Sciatic nerve (tissue), 2 donors: ENCODE measurements at regions of chr5 and their contacts with region 1.

Region 1: GRCh38 chr5:611721-612486 is at the start of gene CEP72:
- DNase-seq: peak; percentile 95
- ATAC-seq: peak; percentile 98
- total RNA-seq, gene CEP72: 7.5 TPM

Region 2: DNA sequence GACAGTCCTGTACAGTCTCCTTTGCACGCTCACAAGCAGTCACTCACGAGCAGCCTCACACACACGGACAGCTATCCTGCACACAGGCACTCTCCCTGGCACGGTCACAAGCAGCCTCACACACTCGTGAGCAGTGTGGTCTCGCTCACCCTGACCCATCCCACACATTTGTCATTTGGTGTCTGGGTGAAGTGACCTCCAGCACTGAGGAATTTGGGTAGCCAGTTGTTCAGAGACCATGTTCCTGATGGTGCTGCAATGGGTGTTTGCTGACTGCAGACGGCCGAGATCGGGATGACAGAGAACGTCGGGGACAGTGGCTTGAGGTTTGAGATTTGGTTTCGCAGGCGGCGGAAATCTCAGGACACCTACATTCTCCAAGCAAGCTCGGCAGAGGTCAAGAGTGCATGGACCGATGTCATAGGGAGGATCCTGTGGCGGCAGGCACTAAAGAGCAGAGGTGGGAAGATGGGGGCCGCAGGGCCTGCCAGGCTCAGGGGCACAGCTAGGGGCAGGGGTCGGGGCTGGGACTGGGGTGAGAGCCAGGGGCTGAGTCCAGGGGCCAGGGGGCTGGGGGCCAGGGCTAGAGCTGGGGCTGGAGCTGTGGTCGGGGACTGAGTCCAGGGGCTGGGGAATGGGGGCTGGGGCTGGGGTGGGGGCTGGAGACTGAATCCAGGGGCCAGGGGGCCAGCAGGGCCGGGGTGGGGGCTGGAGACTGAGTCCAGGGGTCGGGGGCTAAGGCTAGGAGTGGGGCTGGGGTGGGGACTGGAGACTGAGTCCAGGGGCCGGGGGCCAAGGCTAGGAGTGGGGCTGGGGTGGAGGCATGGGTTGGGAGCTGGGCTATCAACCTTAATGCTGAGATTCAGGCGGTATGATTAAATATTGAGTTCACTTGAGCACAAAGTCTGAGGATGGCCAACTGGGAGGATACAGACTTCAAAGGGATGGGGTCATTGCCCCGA is 438.0 kb before region 1 on chr5:
- intact Hi-C with region 1: no loop called
- DNase-seq: peak; percentile 39
- ATAC-seq: no peak

Region 3: DNA sequence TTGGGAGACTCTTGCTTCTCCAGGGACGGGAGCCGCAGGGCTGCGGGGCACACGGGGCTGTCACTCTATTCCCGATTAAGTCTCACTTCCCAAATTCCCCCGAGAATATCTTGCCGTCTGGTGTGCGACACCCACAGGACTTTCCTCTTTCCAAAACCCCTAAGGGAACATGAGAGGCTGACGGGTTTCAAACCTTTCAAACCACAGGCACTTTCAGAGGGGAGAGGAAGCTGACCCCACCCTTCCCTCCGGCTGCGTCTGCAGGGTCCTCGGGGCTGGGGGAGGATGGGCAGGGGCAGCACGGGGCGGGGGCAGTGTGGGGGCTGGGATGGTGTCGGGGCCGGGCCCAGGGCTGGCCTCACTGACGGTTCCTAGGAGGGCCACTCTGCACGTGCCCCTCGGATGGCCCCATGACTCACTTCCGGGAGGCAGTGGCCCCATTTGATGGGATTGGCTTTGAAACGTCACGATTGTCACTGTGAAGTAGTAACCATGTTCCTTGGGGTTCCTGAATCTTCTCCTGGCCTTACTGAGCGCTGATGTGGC is 125.9 kb before region 1 on chr5:
- intact Hi-C with region 1: loop called (anchors 10 kb)
- DNase-seq: no peak
- ATAC-seq: no peak

Region 4: DNA sequence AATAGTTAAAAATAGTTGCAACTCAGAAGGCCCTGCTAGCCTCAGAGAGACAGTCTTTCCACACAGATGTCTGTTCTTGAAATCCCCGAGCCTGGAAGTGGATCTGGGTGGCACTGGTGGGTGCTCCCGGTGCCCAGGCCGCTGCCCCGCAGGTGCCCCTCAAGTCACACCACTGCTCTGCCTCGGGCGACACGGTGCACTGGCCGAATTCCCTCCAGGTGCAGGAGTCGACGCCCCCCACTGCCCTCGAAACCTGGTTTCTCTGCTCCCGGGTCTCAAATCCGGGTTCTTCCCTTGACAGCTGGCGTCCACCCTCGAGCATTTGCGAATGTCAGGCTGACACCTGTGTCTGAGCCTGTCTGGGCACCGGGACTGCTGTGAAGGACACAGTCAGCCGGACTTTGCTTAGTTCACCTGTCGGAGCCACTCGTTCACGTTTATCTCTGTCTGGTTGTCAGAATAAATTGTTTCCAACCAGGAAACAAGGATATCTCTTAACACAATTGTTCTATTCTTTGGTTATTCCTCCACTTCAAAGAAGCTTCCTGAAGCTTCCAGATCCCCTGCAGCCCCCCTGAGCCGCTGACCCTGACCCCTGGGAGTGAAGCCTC is 114.7 kb before region 1 on chr5:
- intact Hi-C with region 1: no loop called
- DNase-seq: no peak
- ATAC-seq: no peak

Region 5: GRCh38 chr5:891827-892393 is 280.0 kb after region 1 on chr5:
- intact Hi-C with region 1: no loop called
- DNase-seq: no peak
- ATAC-seq: peak; percentile 38